CD8-positive, alpha-beta T cell (primary cell): ENCODE measurements at regions of chr18 and their contacts with region 1.

Region 1: GRCh38 chr18:36095936-36096519 is 28.7 kb upstream of the RPRD1A start:
- DNase-seq: peak in 2 of 9 experiments; percentile 55 to 67
- ATAC-seq: peak; percentile 46
- H3K4me3 ChIP-seq: no peak overlapping the region
- H3K4me3 Mint-ChIP-seq: no peak overlapping the region
- H3K27ac ChIP-seq: no peak overlapping the region
- H3K27ac Mint-ChIP-seq: no peak overlapping the region
- H3K4me1 ChIP-seq: no peaks in the 10 kb centered on the region
- H3K4me1 Mint-ChIP-seq: peaks cover 10% of the 10 kb centered on the region
- H3K27me3 ChIP-seq: no peaks in the 10 kb centered on the region
- H3K27me3 Mint-ChIP-seq: no peaks in the 10 kb centered on the region
- CTCF ChIP-seq: peak; percentile 72

Region 2: DNA sequence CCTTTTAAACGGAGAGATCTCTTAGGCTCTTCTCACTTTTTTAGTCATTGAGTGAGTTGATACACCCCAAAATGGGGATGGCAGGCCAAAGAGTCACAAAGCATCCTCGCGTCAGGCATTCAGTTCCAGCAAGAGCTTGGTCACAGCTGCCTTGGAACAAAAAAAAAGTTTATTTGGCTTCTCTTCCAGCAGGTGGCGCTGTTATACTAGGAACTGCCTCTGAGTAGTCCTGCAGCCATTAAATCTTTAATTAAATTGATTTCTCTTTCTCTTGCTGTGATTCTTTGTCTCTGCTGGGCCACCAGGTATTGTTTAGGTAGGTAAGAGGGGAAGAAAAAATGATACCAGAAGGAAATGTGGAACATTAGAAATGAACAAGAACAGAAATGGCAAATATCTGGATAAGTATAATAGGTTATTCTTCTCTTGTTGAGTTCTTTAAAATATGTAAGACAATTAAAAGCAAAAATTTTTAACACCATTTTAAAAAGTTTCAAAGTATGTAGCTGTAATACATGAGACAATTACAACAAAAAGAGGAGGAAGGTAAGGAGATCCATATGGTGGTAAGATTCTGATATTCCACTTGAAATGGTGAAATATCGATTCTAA is 339.4 kb before region 1 on chr18:
- CTCF ChIA-PET with region 1: interaction called, 4 read pairs
- POLR2A ChIA-PET with region 1: no interaction called
- intact Hi-C with region 1: loop called (anchors 5 to 10 kb)
- DNase-seq: peak in 8 of 9 experiments; percentile 35 to 64 (median 54)
- ATAC-seq: peak; percentile 40
- H3K4me3 ChIP-seq: no peak overlapping the region
- H3K4me3 Mint-ChIP-seq: no peak overlapping the region
- H3K27ac ChIP-seq: no peak overlapping the region
- H3K27ac Mint-ChIP-seq: no peak overlapping the region
- H3K4me1 ChIP-seq: no peaks in the 10 kb centered on the region
- H3K4me1 Mint-ChIP-seq: no peaks in the 10 kb centered on the region
- H3K27me3 ChIP-seq: peaks cover 0 to 8% of the 10 kb centered on the region in 2 experiments
- H3K27me3 Mint-ChIP-seq: peaks cover 24% of the 10 kb centered on the region
- CTCF ChIP-seq: peak; percentile 84

Region 3: GRCh38 chr18:36035253-36035652 is 60.8 kb before region 1 on chr18:
- CTCF ChIA-PET with region 1: no interaction called
- POLR2A ChIA-PET with region 1: no interaction called
- intact Hi-C with region 1: no loop called
- DNase-seq: no peak
- ATAC-seq: no peak
- H3K4me3 ChIP-seq: no peak overlapping the region
- H3K4me3 Mint-ChIP-seq: no peak overlapping the region
- H3K27ac ChIP-seq: no peak overlapping the region
- H3K27ac Mint-ChIP-seq: peak overlapping the region; percentile 84
- H3K4me1 ChIP-seq: peaks cover 4% of the 10 kb centered on the region
- H3K4me1 Mint-ChIP-seq: peaks cover 47% of the 10 kb centered on the region
- H3K27me3 ChIP-seq: no peaks in the 10 kb centered on the region
- H3K27me3 Mint-ChIP-seq: no peaks in the 10 kb centered on the region
- CTCF ChIP-seq: no peak

Region 4: DNA sequence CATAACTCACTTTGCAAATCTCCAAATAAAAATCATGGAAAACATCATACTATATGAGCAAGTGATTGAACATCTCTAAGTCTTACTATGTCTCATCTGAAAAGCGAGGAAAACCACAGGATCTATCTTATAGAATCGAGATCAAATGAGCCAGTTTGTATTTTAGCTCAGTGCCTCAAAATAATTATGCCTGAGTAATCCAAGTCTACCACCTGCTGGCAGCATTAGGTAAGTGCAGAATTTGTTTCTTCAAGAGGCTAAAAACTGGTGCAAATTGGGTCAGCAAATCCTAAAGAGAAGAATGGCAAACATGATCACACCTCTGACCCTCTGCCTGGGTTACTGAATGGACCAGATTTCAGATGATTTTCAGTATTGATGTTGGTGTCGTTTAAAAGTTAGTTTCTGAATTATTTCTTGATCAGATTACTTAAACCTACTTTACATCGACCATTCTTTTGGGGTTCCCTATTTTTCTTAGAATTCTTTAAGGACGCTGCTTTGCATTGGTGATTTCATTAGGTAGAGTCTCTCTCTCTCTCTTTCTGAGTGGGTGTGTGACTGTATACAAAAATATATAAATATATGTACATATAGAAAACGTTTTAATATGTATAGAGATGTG is 188.8 kb after region 1 on chr18:
- CTCF ChIA-PET with region 1: interaction called, 113 read pairs
- POLR2A ChIA-PET with region 1: no interaction called
- intact Hi-C with region 1: loop called (anchors 1 kb)
- DNase-seq: peak in 8 of 9 experiments; percentile 16 to 75 (median 46)
- ATAC-seq: peak; percentile 77
- H3K4me3 ChIP-seq: no peak overlapping the region
- H3K4me3 Mint-ChIP-seq: no peak overlapping the region
- H3K27ac ChIP-seq: no peak overlapping the region
- H3K27ac Mint-ChIP-seq: no peak overlapping the region
- H3K4me1 ChIP-seq: no peaks in the 10 kb centered on the region
- H3K4me1 Mint-ChIP-seq: peaks cover 2% of the 10 kb centered on the region
- H3K27me3 ChIP-seq: no peaks in the 10 kb centered on the region
- H3K27me3 Mint-ChIP-seq: peaks cover 23% of the 10 kb centered on the region
- CTCF ChIP-seq: peak; percentile 95

Region 5: DNA sequence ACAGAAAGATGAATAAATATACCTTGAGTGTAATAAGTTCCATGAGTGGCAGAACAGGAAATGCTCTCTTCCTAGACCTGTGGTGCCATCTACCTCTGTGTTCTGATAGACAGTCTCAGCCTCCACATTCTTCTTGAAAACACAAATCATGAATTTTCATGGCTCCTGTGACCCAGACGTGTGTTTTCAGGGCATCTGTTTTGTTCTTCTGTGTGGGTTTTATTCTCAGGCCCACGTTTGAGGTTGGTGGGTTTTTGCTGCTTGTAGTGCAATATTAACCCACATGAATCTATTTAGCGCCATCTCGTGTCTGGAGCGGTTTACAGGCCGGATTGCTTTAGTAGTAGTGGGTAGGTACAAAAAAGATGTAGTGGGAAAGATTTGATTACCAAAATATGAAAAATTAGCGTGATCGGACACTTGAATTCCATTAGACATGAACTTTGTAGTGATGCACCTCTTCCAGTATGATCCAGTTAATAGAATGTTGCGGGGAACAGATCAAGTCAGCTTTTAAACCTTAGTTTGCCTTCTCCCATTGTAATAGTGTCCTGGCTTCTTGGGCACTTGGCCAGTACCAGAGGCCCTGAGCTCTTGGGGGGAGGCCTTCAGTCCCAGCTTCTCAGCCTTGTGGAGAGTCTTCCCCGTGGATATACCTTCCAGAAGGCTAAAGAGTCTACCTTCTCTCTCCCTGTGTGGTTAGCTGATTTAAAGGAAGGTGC is 476.3 kb after region 1 on chr18:
- CTCF ChIA-PET with region 1: interaction called, 3 read pairs
- POLR2A ChIA-PET with region 1: no interaction called
- intact Hi-C with region 1: loop called (anchors 5 kb)
- DNase-seq: peak in 2 of 9 experiments; percentile 20 to 34
- ATAC-seq: no peak
- H3K4me3 ChIP-seq: no peak overlapping the region
- H3K4me3 Mint-ChIP-seq: no peak overlapping the region
- H3K27ac ChIP-seq: no peak overlapping the region
- H3K27ac Mint-ChIP-seq: no peak overlapping the region
- H3K4me1 ChIP-seq: no peaks in the 10 kb centered on the region
- H3K4me1 Mint-ChIP-seq: peaks cover 2% of the 10 kb centered on the region
- H3K27me3 ChIP-seq: no peaks in the 10 kb centered on the region
- H3K27me3 Mint-ChIP-seq: no peaks in the 10 kb centered on the region
- CTCF ChIP-seq: no peak

Region 6: GRCh38 chr18:36809590-36810381 is 713.8 kb after region 1 on chr18:
- CTCF ChIA-PET with region 1: no interaction called
- POLR2A ChIA-PET with region 1: no interaction called
- intact Hi-C with region 1: loop called (anchors 1 to 5 kb)
- DNase-seq: peak in 8 of 9 experiments; percentile 2 to 77 (median 29)
- ATAC-seq: peak; percentile 98
- H3K4me3 ChIP-seq: no peak overlapping the region
- H3K4me3 Mint-ChIP-seq: no peak overlapping the region
- H3K27ac ChIP-seq: no peak overlapping the region
- H3K27ac Mint-ChIP-seq: no peak overlapping the region
- H3K4me1 ChIP-seq: no peaks in the 10 kb centered on the region
- H3K4me1 Mint-ChIP-seq: peaks cover 7% of the 10 kb centered on the region
- H3K27me3 ChIP-seq: no peaks in the 10 kb centered on the region
- H3K27me3 Mint-ChIP-seq: no peaks in the 10 kb centered on the region
- CTCF ChIP-seq: peak; percentile 92